Activated naive CD4-positive, alpha-beta T cell treated with anti-CD3 and anti-CD28 coated beads for 36 hours (primary cell): ENCODE measurements at regions of chr2 and their contacts with region 1.

Region 1: GRCh38 chr2:96145036-96145847 is at the start of gene DUSP2:
- DNase-seq: peak; percentile 95
- H3K4me3 Mint-ChIP-seq: peak within 1 kb of the TSS; percentile 96
- H3K27ac Mint-ChIP-seq: peak within 1 kb of the TSS; percentile 99
- H3K4me1 Mint-ChIP-seq: peaks cover 52% of the 10 kb centered on the region
- H3K27me3 Mint-ChIP-seq: no peaks in the 10 kb centered on the region
- total RNA-seq, gene DUSP2: 429 to 463 TPM

Region 2: DNA sequence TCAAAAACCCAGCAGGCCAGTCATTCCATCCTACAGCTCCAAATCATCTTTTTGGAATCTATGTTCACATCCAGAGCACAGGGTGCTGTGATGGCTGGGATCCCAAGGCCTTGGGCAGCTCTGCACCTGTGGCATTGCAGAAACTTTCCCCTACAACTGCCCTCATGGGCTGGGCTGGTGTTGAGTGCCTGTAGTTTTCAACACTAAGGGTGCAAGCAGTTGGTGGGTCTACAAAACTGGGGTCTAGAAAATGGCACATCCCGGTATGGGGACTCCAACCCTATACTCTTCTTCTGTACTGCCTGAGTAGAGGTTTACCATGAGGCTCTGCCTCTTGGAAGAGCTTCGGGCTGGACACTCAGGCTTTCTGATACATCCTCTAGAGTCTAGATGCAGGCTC is 1369.2 kb before region 1 on chr2:
- CTCF ChIA-PET with region 1: no interaction called
- intact Hi-C with region 1: no loop called
- DNase-seq: no peak
- H3K4me3 Mint-ChIP-seq: no peak overlapping the region
- H3K27ac Mint-ChIP-seq: no peak overlapping the region
- H3K4me1 Mint-ChIP-seq: no peaks in the 10 kb centered on the region
- H3K27me3 Mint-ChIP-seq: no peaks in the 10 kb centered on the region

Region 3: DNA sequence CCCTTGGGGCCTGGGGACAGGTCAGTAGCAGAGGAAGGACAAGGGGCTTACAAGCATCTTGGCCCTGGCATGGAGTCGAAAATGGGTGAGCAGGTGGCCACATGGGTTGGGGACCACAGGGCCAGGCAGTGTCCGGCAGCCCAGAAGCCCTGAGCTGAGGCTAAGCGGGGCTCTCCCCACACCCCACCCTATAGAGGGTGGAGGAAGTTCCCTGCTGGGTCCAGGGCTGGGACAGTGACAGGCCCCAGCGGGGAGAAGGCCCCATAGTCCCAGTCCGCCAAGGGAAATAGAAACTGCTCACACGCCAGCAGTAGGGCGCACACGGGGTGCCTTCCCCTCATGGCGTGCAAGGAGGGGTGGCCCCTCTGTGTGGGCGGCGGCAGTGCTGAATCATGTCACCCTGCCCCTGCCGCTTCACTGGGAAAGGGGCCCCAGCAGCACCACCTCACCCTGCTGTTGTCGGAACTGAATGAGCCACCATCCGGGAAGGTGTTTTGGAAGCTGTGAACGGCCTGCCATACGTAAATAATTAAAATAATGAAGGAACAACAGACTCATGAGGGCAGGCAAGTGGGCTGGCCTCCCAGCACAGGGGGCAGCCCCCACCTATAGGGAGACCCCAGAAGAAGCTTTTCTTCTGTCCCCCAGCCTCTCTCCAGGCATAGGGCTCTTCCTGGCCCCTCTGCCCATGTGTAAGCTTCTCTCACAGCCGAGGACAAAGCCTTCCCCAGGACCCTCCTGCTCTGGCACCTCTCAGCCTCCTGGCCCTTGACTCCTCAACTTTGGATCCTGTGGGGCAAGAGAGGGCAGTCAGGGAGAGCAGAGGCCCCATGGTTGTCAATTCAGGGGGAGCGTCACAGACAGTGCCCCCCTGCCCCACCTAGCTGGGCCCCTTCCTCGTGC is 12.7 kb after region 1 on chr2:
- CTCF ChIA-PET with region 1: interaction called, 76 read pairs
- intact Hi-C with region 1: loop called (anchors 1 kb)
- DNase-seq: peak; percentile 99
- H3K4me3 Mint-ChIP-seq: peak overlapping the region; percentile 75
- H3K27ac Mint-ChIP-seq: peak overlapping the region; percentile 95
- H3K4me1 Mint-ChIP-seq: peaks cover 85% of the 10 kb centered on the region
- H3K27me3 Mint-ChIP-seq: no peaks in the 10 kb centered on the region

Region 4: DNA sequence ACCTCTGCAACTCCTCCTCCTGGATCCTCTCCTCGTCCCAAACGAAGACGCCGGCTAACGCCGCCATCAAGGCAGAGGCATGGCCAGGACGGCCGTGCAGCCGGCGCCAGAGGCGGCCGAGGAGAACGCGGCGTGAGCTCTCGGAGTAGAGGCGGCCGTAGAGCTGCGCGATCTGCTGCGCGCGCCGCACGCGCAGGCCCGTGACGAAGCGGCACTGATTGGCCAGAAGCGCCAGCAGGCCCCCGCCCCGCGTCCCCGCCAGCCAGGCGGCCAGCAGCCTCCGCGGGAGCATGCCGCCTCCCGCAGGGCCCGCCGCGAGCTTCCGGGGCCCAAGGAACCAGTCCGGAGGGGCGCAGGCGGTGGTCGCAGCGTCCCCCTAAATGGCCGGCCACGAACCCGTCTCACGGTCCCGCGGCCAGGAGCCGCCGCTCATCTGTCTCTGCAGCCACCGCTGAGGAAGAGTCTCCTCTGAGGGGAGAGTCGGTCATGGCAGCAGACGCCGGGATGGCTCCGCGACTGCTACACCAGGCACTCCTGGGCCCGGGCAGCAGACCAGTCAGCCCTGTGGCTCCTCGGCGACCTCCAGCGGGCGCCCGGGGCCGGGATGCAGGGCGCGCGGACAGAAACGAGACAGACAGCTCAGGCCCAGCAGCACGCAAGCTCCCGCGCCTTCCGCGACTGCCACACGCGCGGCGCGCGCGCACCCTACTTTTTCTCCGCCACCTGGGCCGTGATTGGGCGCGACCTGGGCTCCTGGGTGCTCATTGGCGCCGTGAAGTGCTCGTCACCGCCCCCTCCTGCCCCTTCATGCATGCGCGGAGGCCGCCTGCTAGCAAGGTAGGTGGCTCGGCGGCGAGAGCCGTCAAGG is 63.1 kb after region 1 on chr2 and contains the start of gene STARD7:
- CTCF ChIA-PET with region 1: no interaction called
- intact Hi-C with region 1: loop called (anchors 1 kb)
- DNase-seq: peak; percentile 98
- H3K4me3 Mint-ChIP-seq: peak within 1 kb of the TSS; percentile 92
- H3K27ac Mint-ChIP-seq: peak within 1 kb of the TSS; percentile 88
- H3K4me1 Mint-ChIP-seq: peaks cover 48% of the 10 kb centered on the region
- H3K27me3 Mint-ChIP-seq: no peaks in the 10 kb centered on the region
- total RNA-seq, gene STARD7: 84.7 to 87.6 TPM

Region 5: GRCh38 chr2:96305091-96305978 is 160.1 kb after region 1 on chr2 and contains the start of gene SNRNP200:
- CTCF ChIA-PET with region 1: interaction called, 4 read pairs
- intact Hi-C with region 1: loop called (anchors 1 kb)
- DNase-seq: peak; percentile 92
- H3K4me3 Mint-ChIP-seq: peak within 1 kb of the TSS; percentile 100
- H3K27ac Mint-ChIP-seq: peak within 1 kb of the TSS; percentile 98
- H3K4me1 Mint-ChIP-seq: peaks cover 49% of the 10 kb centered on the region
- H3K27me3 Mint-ChIP-seq: no peaks in the 10 kb centered on the region
- total RNA-seq, gene SNRNP200: 179 to 181 TPM

Region 6: GRCh38 chr2:96485751-96486651 is 340.8 kb after region 1 on chr2:
- CTCF ChIA-PET with region 1: no interaction called
- intact Hi-C with region 1: loop called (anchors 2 kb)
- DNase-seq: peak; percentile 94
- H3K4me3 Mint-ChIP-seq: peak overlapping the region; percentile 97
- H3K27ac Mint-ChIP-seq: peak overlapping the region; percentile 99
- H3K4me1 Mint-ChIP-seq: peaks cover 49% of the 10 kb centered on the region
- H3K27me3 Mint-ChIP-seq: no peaks in the 10 kb centered on the region

Region 7: GRCh38 chr2:96960153-96960961 is 815.1 kb after region 1 on chr2:
- CTCF ChIA-PET with region 1: no interaction called
- intact Hi-C with region 1: loop called (anchors 5 kb)
- DNase-seq: peak; percentile 92
- H3K4me3 Mint-ChIP-seq: no peak overlapping the region
- H3K27ac Mint-ChIP-seq: no peak overlapping the region
- H3K4me1 Mint-ChIP-seq: peaks cover 49% of the 10 kb centered on the region
- H3K27me3 Mint-ChIP-seq: no peaks in the 10 kb centered on the region